Ovary (tissue), 10 donors: ENCODE measurements at regions of chr12 and their contacts with region 1.

Region 1: GRCh38 chr12:47591361-47591791 is 114.5 kb downstream of the RPAP3 start:
- DNase-seq: no peak
- H3K4me3 ChIP-seq: no peak overlapping the region
- H3K27ac ChIP-seq: no peak overlapping the region
- H3K4me1 ChIP-seq: no peaks in the 10 kb centered on the region
- H3K27me3 ChIP-seq: no peaks in the 10 kb centered on the region
- CTCF ChIP-seq: no peak
- EP300 ChIP-seq: no peak
- POLR2A ChIP-seq: no peak

Region 2: DNA sequence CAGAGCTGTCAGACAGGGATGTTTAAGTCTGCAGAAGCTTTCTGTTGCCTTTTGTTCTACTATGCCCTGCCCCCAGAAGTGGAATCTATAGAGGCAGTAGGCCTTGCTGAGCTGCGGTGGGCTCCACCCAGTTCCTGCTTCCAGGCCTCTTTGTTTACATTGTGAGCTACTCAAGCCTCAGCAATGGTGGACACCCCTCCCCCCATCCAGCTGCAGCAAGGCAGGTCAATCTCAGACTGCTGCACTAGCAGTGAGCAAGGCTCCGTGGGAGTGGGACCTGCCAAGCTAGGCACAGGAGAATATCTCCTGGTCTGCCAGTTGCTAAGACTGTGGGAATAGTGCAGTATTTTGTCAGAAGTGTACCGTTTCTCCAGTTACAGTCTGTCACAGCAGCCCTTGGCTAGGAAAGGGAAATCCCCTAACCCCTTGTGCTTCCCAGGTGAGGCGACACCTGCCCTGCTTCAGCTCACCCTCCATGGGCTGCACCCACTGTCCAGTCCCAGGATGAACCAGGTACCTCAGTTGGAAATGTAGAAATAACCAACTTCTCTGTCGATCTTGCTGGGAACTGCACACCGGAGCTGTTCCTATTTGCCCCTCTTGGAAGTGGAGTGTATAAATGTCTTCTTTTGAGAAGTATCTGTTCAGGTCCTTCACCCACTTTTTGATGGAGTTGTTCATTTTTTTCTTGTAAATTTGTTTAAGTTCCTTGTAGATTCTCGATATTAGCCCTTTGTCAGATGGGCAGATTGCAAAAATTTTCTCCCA is 1005.3 kb before region 1 on chr12:
- intact Hi-C with region 1: loop called in 1 of 4 experiments (anchors 5 kb)
- DNase-seq: no peak
- H3K4me3 ChIP-seq: no peak overlapping the region
- H3K27ac ChIP-seq: no peak overlapping the region
- H3K4me1 ChIP-seq: no peaks in the 10 kb centered on the region
- H3K27me3 ChIP-seq: no peaks in the 10 kb centered on the region
- CTCF ChIP-seq: no peak
- EP300 ChIP-seq: no peak
- POLR2A ChIP-seq: no peak

Region 3: GRCh38 chr12:47216150-47216677 is 375.2 kb before region 1 on chr12:
- intact Hi-C with region 1: no loop called
- DNase-seq: no peak
- H3K4me3 ChIP-seq: no peak overlapping the region
- H3K27ac ChIP-seq: no peak overlapping the region
- H3K4me1 ChIP-seq: no peaks in the 10 kb centered on the region
- H3K27me3 ChIP-seq: no peaks in the 10 kb centered on the region
- CTCF ChIP-seq: no peak
- EP300 ChIP-seq: no peak
- POLR2A ChIP-seq: no peak

Region 4: DNA sequence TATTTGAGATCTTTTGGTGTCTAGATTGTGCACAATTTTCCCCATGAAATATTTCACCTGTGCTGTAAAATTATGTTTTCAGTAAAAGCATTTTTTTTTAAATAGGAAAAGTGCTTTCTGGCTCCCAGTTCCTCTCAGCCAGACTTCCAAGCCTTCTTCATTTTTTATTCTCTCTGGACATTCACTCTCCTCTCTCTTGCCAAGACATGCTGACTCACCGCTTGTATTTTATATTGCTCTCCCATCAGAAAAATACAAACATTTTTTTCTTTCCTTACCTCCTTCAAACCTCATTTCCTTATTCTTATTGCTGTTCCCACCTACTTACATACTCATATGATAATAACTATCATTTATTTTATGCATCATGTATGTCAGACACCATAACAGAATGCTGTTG is 797.1 kb after region 1 on chr12:
- intact Hi-C with region 1: loop called in 1 of 4 experiments (anchors 5 kb)
- DNase-seq: no peak
- H3K4me3 ChIP-seq: no peak overlapping the region
- H3K27ac ChIP-seq: no peak overlapping the region
- H3K4me1 ChIP-seq: no peaks in the 10 kb centered on the region
- H3K27me3 ChIP-seq: no peaks in the 10 kb centered on the region
- CTCF ChIP-seq: no peak
- EP300 ChIP-seq: no peak
- POLR2A ChIP-seq: no peak